IMR-90 (cell line): ENCODE measurements at regions of chr7 and their contacts with region 1.

Region 1: DNA sequence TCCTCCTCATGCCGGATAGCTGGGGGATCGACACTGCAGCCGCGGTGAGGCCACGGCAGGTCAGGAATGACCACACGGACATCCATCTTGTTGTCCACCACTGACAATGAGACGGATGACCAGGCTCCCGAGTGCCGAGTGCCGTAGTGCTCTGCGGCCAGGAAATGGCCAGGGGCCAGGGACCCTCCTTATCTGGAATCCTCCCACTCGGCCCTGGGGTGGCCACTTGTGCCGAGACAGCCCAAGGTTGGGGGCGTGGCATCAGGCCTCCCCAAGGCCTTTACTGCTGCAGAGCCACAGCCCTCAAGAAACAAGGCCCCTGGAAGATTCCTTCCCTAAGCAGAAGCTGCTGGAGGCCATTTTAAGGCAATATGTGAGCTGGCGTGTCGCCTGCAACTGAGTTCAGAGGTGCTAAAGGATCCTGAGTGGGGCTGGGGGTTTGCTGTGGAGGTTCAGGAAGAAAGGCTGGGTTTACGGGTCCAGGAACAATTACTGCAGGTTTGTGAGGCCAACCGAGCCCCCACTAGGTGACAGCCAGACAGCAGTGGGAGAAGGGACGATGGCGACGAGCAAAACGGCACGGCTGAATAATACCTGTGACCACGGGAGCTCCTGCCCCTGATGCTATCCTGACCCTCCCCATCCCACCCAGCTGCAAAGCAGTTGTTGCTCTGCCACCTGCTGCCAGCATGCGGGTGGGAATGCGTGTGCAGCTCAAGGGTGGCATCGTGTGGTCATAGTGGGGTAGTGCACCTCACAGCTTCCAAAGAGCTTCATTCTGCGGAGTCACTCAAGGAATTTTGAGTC is 31.6 kb upstream of the LEP start:
- DNase-seq: peak; percentile 69
- ATAC-seq: peak; percentile 93
- H3K4me3 ChIP-seq: no peak overlapping the region
- H3K27ac ChIP-seq: no peak overlapping the region
- H3K4me1 ChIP-seq: no peaks in the 10 kb centered on the region
- H3K27me3 ChIP-seq: peaks cover 55% of the 10 kb centered on the region
- CTCF ChIP-seq: peak; percentile 99
- POLR2A ChIP-seq: peak; percentile 64
- RAD21 ChIP-seq: peak; percentile 100

Region 2: DNA sequence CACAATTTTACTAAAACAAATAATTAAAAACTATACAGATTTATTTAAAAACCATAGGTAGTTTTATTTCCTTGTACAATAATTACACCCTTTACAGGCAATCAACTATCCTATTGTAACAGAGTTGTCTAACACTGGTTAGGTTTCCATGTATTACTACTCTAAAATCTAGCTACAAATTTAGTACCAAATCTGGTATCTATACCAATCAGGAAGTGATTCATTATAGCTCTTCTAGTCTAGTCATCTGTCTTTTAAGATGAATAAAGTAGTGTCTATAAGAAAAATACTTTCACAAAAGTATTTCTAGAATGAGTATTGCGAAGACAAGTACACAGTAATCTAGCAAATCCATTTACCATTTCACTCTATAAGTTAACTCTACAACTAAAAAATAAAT is 833.8 kb before region 1 on chr7:
- CTCF ChIA-PET with region 1: no interaction called
- POLR2A ChIA-PET with region 1: no interaction called
- dilution Hi-C with region 1: no loop called
- in situ Hi-C with region 1: no loop called
- intact Hi-C with region 1: loop called (anchors 10 kb)
- DNase-seq: no peak
- ATAC-seq: no peak
- H3K4me3 ChIP-seq: no peak overlapping the region
- H3K27ac ChIP-seq: no peak overlapping the region
- H3K4me1 ChIP-seq: no peaks in the 10 kb centered on the region
- H3K27me3 ChIP-seq: no peaks in the 10 kb centered on the region
- CTCF ChIP-seq: no peak
- POLR2A ChIP-seq: no peak
- RAD21 ChIP-seq: no peak

Region 3: DNA sequence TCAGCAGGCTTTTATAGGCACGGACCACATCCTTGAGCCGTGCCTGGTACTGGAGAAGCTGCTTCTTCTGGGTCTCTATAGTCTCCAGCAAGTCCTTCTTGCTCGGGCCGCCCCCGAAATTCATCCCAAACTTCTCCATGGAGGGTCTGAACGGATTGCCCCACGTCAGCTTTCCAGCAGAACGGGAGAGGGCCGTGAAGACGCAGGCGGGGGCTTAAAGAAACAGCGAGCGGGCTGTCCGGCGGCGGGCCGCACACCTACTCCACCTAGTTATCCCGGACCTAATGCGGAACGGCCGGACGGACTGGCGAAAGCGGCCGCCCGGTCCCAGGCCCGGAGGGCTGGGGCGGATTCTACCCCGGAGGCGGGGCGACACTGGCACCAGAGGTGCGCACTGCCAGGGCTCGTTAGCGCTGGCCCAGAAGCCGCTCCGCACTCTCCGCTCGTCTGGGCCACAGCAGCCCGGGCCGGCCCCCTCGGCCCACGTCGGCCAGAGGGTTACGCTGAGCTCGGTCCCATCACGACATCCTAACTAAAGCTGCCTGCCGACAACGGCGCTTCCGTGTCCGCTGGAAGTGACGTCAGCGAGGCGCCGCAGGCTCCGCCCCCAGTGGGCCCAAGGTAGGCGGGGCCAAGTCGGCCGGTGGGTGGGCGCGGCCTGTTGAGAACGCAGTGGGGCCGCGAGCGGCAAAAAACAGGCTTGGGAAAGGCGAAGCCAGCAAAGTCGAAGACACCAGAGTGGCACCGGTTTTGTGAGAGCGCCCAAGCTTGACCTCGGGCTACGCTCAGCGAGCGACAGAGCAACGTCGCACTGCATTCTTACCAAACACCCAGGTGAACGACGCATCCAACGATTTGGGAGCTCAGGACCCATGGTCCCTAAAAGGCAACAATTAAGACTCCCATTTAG is 624.1 kb before region 1 on chr7 and contains the start of gene GCC1:
- CTCF ChIA-PET with region 1: interaction called, 5 read pairs
- POLR2A ChIA-PET with region 1: no interaction called
- dilution Hi-C with region 1: no loop called
- in situ Hi-C with region 1: no loop called
- intact Hi-C with region 1: loop called (anchors 2 kb)
- DNase-seq: peak; percentile 87
- ATAC-seq: peak; percentile 75
- H3K4me3 ChIP-seq: peak within 1 kb of the TSS; percentile 87
- H3K27ac ChIP-seq: peak within 1 kb of the TSS; percentile 83
- H3K4me1 ChIP-seq: peaks cover 21% of the 10 kb centered on the region
- H3K27me3 ChIP-seq: no peaks in the 10 kb centered on the region
- CTCF ChIP-seq: no peak
- POLR2A ChIP-seq: peak; percentile 94
- RAD21 ChIP-seq: no peak
- total RNA-seq, gene GCC1: 20.8 and 22.9 TPM in 2 replicates

Region 4: DNA sequence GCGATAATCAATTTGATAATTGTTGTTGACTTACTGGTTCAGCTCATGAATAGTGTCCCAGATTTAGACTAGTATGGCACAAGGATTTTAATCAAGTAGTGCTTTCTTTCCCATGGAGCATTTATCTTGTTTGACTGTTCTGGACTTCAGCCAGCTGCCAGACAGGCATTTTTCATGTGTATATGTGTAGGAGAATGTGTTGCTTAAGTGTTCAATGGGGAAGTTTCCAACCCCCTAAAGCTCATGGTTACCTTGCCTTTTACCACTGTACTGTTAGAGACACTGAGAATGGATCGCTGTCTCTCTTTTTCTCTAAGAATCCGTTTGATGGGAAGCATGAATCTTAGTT is 282.1 kb before region 1 on chr7:
- CTCF ChIA-PET with region 1: no interaction called
- POLR2A ChIA-PET with region 1: interaction called, 3 read pairs
- dilution Hi-C with region 1: no loop called
- in situ Hi-C with region 1: no loop called
- intact Hi-C with region 1: loop called (anchors 10 kb)
- DNase-seq: peak; percentile 46
- ATAC-seq: peak; percentile 48
- H3K4me3 ChIP-seq: no peak overlapping the region
- H3K27ac ChIP-seq: no peak overlapping the region
- H3K4me1 ChIP-seq: peaks cover 8% of the 10 kb centered on the region
- H3K27me3 ChIP-seq: no peaks in the 10 kb centered on the region
- CTCF ChIP-seq: no peak
- POLR2A ChIP-seq: no peak
- RAD21 ChIP-seq: no peak

Region 5: DNA sequence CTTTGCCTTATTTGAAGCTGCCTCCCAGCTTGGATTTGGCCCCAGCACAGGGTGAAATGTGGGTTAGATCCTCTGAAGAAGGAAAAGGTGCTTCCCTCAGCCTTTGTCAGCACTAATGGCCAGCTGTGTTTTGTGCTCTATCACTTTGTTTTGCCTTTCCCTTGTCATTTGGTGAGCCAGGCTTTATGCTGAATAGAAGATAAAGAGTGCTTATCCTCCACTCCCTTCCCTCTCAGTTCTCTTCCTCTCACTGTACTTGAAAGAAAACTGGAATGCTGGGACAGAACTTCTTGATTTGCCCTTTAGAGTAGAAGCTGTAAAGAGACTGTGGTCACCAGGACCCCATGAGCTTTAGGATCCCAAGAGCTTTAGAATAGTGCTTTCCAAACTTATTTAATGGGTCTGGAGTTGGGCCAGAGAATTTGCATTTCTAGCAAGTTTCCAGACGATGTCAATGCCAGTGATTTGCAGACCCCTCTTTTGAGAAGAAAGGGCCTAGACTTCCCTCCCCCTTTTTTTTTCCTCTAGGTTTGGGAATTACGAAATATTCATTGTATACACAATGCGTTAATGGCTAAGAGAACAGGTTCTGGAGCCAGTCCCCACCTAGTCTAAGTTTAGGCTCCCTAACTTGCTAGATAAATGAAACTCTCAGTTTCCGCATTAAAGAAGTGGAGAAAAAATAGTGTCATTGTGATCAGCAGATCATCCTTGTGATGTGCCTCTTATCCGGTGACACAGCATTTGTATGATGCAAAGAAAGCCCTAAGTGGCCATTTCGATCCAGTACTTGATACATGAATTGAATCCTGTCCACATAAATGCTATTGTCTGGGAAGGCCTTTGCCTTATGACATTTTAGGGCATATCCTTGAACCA is 259.5 kb before region 1 on chr7:
- CTCF ChIA-PET with region 1: no interaction called
- POLR2A ChIA-PET with region 1: no interaction called
- dilution Hi-C with region 1: no loop called
- in situ Hi-C with region 1: no loop called
- intact Hi-C with region 1: no loop called
- DNase-seq: no peak
- ATAC-seq: no peak
- H3K4me3 ChIP-seq: no peak overlapping the region
- H3K27ac ChIP-seq: no peak overlapping the region
- H3K4me1 ChIP-seq: peaks cover 6% of the 10 kb centered on the region
- H3K27me3 ChIP-seq: no peaks in the 10 kb centered on the region
- CTCF ChIP-seq: no peak
- POLR2A ChIP-seq: no peak
- RAD21 ChIP-seq: no peak

Region 6: GRCh38 chr7:128031901-128032604 is 177.4 kb before region 1 on chr7:
- CTCF ChIA-PET with region 1: interaction called, 4 read pairs
- POLR2A ChIA-PET with region 1: no interaction called
- dilution Hi-C with region 1: no loop called
- in situ Hi-C with region 1: no loop called
- intact Hi-C with region 1: loop called (anchors 1 kb)
- DNase-seq: peak; percentile 96
- ATAC-seq: peak; percentile 84
- H3K4me3 ChIP-seq: peak overlapping the region; percentile 64
- H3K27ac ChIP-seq: no peak overlapping the region; the same call in 1 of the 2 replicates
- H3K4me1 ChIP-seq: peaks cover 7% of the 10 kb centered on the region; the same call in 1 of the 2 replicates
- H3K27me3 ChIP-seq: no peaks in the 10 kb centered on the region
- CTCF ChIP-seq: peak; percentile 49
- POLR2A ChIP-seq: peak; percentile 54; the same call in 1 of the 2 replicates
- RAD21 ChIP-seq: peak; percentile 59

Region 7: GRCh38 chr7:129169171-129169671 is 959.8 kb after region 1 on chr7:
- CTCF ChIA-PET with region 1: no interaction called
- POLR2A ChIA-PET with region 1: no interaction called
- dilution Hi-C with region 1: no loop called
- in situ Hi-C with region 1: no loop called
- intact Hi-C with region 1: no loop called
- DNase-seq: no peak
- ATAC-seq: peak; percentile 91
- H3K4me3 ChIP-seq: peak overlapping the region; percentile 45
- H3K27ac ChIP-seq: no peak overlapping the region; the same call in 1 of the 2 replicates
- H3K4me1 ChIP-seq: no peaks in the 10 kb centered on the region; the same call in 1 of the 2 replicates
- H3K27me3 ChIP-seq: peaks cover 42% of the 10 kb centered on the region
- CTCF ChIP-seq: no peak
- POLR2A ChIP-seq: no peak
- RAD21 ChIP-seq: no peak